K562 (cell line): ENCODE measurements at regions of chr18 and their contacts with region 1.

Region 1: DNA sequence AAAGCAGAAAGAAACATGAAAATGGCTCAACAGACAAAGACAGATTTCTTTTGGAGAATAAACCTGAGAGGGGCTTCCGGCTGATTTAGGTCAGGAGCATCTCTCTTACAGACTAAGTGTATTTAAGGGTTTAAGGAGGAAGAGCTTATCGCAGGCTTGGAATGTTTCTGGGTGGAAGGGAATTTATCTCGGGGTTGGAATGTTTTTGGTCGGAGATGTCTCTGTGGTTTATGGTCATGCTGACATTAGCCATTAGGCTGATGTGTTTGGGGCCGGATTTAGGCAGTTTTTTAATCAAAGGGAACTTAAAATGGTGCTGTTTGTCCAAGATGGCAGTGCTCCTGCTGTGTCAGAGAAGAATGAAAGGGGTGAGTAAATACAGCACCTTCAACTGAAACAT is 14.4 kb upstream of the PSMA8 start:
- DNase-seq: no peak
- ATAC-seq: no peak
- H3K4me3 ChIP-seq: no peak overlapping the region
- H3K27ac ChIP-seq: no peak overlapping the region
- H3K4me1 ChIP-seq: no peaks in the 10 kb centered on the region
- H3K27me3 ChIP-seq: peaks cover 0 to 16% of the 10 kb centered on the region in 2 experiments; a peak in 2 of 5 replicates
- CTCF ChIP-seq: no peak
- EP300 ChIP-seq: no peak
- POLR2A ChIP-seq: no peak
- RAD21 ChIP-seq: no peak

Region 2: DNA sequence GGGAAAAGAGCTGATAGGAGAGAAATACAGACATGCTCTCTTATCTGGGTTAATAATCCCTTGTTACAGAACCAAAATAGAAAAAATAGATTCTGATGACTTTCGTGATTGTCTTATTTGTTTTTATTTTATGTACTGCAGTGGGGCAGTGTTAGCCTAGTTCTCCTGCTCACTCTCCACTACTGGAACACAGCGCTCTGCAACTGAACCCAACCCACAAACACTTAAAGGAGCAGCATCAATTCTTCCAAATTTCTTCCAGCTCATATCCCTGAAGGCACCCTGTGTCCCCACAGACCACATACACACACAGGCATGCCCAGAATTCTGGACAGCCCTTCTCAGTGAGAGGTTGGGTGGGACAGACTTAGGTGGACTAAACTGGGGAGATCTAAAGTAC is 189.5 kb before region 1 on chr18:
- CTCF ChIA-PET with region 1: no interaction called
- POLR2A ChIA-PET with region 1: no interaction called
- in situ Hi-C with region 1: no loop called
- intact Hi-C with region 1: loop called (anchors 5 kb)
- DNase-seq: no peak
- ATAC-seq: peak; percentile 42; the same call in 2 of the 3 replicates
- H3K4me3 ChIP-seq: no peak overlapping the region
- H3K27ac ChIP-seq: no peak overlapping the region
- H3K4me1 ChIP-seq: no peaks in the 10 kb centered on the region
- H3K27me3 ChIP-seq: no peaks in the 10 kb centered on the region; a peak in 1 of 5 replicates
- CTCF ChIP-seq: no peak
- EP300 ChIP-seq: no peak
- POLR2A ChIP-seq: no peak
- RAD21 ChIP-seq: no peak